T-cell (primary cell): ENCODE measurements at regions of chr14 and their contacts with region 1.

Region 1: DNA sequence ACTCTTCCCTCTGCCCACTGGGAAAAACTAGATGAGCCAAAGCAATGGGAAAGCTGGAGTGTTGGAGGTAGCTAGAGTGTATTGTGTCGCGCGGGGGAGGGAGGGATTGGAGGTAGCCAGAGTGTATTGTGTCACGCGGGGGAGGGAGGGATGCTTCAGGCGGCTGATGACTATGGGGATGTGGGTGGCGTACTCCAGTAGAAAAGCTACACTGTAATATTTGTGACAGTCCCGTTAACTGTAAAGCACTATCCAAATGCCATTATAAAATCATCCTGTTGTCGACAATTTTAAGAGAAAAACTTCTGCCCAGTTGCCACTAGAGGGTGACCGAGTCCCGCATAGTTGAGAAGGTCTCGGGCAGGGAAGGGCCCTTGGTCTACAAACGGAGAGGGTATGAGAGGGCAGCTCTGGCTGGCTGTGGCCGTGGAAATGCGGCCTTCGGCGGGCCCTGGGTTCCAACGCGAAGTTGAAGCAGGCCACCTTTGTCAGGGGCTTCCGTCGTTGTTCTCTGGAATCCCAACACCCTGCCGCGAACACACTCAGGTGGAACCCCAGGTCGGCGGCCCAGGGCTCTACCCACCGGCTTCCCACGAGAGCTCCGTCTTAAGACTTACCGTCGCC is 15.1 kb upstream of the PLEK2 start:
- DNase-seq: peak; percentile 53 to 86 (median 69)
- ATAC-seq: peak; percentile 86 to 91 (median 88)
- H3K4me3 ChIP-seq: no peak overlapping the region
- H3K4me3 Mint-ChIP-seq: no peak overlapping the region
- H3K27ac ChIP-seq: no peak overlapping the region
- H3K27ac Mint-ChIP-seq: no peak overlapping the region
- H3K4me1 ChIP-seq: peaks cover 0 to 8% of the 10 kb centered on the region in 2 experiments
- H3K4me1 Mint-ChIP-seq: peaks cover 0 to 1% (median 0%) of the 10 kb centered on the region in 3 donors
- H3K27me3 ChIP-seq: peaks cover 0 to 41% of the 10 kb centered on the region in 2 experiments
- H3K27me3 Mint-ChIP-seq: peaks cover 11 to 18% of the 10 kb centered on the region in 2 donors

Region 2: DNA sequence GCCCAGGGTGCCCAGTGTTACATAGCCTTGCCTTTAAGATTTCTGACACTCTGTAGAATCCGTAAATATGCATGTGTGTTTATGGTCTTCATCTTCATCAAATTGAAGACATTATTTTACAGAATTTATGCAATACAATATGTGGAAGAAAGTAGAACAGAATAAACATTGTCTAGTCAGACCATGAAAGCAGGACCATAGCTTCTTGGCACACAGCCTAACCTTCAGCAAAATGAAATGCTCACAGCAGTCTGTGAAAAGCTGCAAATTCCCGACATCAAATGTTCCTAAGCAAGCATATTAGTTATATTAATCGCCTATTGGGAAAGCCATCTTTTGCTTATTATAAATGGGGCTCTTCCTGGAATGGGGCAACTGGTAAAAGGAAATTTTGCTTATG is 349.2 kb before region 1 on chr14:
- CTCF ChIA-PET with region 1: no interaction called
- POLR2A ChIA-PET with region 1: no interaction called
- DNase-seq: no peak
- ATAC-seq: no peak
- H3K4me3 ChIP-seq: no peak overlapping the region
- H3K4me3 Mint-ChIP-seq: no peak overlapping the region
- H3K27ac ChIP-seq: no peak overlapping the region
- H3K27ac Mint-ChIP-seq: no peak overlapping the region
- H3K4me1 ChIP-seq: no peaks in the 10 kb centered on the region
- H3K4me1 Mint-ChIP-seq: no peaks in the 10 kb centered on the region
- H3K27me3 ChIP-seq: no peaks in the 10 kb centered on the region
- H3K27me3 Mint-ChIP-seq: no peaks in the 10 kb centered on the region

Region 3: GRCh38 chr14:67571272-67571850 is 144.3 kb after region 1 on chr14:
- CTCF ChIA-PET with region 1: interaction called, 42 to 67 read pairs
- POLR2A ChIA-PET with region 1: interaction called in 1 of 2 experiments, 4 read pairs
- DNase-seq: peak; percentile 29 to 80 (median 61)
- ATAC-seq: peak; percentile 78 to 92 (median 90)
- H3K4me3 ChIP-seq: no peak overlapping the region
- H3K4me3 Mint-ChIP-seq: no peak overlapping the region
- H3K27ac ChIP-seq: no peak overlapping the region
- H3K27ac Mint-ChIP-seq: no peak overlapping the region
- H3K4me1 ChIP-seq: no peaks in the 10 kb centered on the region
- H3K4me1 Mint-ChIP-seq: peaks cover 0 to 6% (median 0%) of the 10 kb centered on the region in 3 donors
- H3K27me3 ChIP-seq: peaks cover 0 to 26% of the 10 kb centered on the region in 2 experiments
- H3K27me3 Mint-ChIP-seq: peaks cover 5 to 8% of the 10 kb centered on the region in 2 donors